ENCODE measurements at regions of chr16 and their contacts with region 1.

Region 1: DNA sequence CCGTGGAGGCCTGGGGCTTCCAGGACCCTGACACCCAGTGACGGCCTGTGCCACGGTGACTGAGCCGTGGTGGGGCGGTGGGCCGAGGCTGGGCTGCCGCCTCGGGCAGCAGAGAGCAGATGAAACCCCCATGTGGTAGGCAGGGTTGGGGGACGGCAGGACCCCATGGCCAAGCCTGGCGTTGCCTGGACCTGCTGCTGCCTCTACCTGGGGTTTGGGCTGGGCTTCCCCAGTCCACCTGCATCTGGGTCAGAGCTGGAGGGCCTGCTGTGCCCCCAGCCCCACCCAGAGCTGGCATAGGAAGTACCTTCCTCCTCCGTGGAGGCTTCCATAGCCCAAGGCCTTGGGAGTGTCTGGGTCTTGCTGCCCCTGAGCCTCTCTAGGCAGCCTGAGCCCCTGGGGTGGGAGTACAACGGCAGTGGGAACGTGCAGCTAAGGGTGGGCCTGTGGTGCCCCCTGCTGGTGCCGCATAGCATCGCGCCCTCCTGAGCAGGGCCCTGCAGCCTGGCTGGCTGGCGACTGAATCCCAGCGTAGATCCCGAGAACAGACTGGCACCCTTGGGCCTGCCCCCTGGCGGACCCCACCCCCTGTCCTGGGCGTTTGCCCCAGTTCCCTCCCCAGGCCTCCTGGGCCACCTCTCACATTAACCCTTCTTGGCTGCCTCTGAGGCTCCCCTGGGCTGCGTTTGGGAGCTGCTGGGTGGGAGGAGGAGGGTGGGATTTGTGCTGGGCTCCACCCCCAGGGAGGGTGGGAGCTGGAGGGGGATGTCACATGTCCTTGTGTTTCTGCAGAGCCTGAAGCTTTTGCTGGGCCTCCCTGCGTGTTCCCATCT is 12.6 kb upstream of the ATP6V0C start:
- DNase-seq: peak; percentile 93
- ATAC-seq: peak; percentile 91
- H3K4me3 Mint-ChIP-seq: peak overlapping the region; percentile 49
- H3K27ac Mint-ChIP-seq: no peak overlapping the region
- H3K4me1 Mint-ChIP-seq: peaks cover 4% of the 10 kb centered on the region
- H3K27me3 Mint-ChIP-seq: no peaks in the 10 kb centered on the region
- CTCF ChIP-seq: peak; percentile 94

Region 2: GRCh38 chr16:2236337-2237101 is 264.6 kb before region 1 on chr16 and contains the start of gene DNASE1L2:
- CTCF ChIA-PET with region 1: interaction called, 17 read pairs
- POLR2A ChIA-PET with region 1: no interaction called
- DNase-seq: peak; percentile 66
- ATAC-seq: peak; percentile 55
- H3K4me3 Mint-ChIP-seq: peak within 1 kb of the TSS; percentile 55
- H3K27ac Mint-ChIP-seq: no peak within 1 kb of the TSS
- H3K4me1 Mint-ChIP-seq: no peaks in the 10 kb centered on the region
- H3K27me3 Mint-ChIP-seq: peaks cover 16% of the 10 kb centered on the region
- CTCF ChIP-seq: no peak
- total RNA-seq, gene DNASE1L2: 0.66 to 1.1 TPM (median 1.0 TPM) in 3 replicates

Region 3: DNA sequence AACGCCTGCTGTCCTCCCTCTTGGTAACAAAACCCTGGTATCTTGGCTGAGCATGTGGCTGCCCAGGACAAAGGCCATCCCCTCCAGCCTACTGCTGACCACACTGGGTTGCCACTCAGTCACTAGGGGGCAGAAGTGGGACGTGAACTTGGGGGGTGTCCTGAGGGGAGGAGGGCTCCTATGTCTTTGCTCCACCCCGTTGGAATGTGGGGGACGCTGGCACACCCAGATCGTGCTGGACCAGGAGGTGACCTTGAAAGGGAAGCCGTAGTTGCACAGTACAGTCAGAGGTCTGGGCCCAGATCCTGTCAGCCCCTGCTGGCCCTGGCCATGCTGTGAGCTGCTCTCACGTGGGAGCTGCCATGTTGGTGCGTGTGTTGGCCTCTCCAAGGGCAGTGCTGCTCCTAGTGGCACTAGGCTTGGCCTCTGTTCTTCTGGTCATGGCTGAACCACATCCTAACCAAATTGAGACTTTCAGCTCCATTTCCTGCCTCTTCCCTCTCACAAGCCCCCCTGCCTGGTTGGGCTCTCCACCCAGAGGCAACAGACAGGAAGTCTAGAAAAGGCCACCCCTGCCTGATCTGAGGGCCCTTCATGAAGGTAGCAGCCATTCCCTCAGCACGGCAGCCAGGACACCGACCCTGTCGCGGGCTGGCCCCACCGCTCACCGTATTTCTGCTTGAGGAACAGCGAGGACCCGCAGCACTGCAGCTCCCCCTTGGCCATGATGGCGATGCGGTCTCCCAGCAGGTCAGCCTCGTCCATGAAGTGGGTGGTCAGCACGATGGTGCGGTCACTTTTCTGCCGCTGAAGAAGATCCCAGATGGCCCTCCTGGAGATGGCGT is 204.3 kb before region 1 on chr16:
- CTCF ChIA-PET with region 1: interaction called, 19 read pairs
- POLR2A ChIA-PET with region 1: no interaction called
- DNase-seq: peak; percentile 74
- ATAC-seq: peak; percentile 91
- H3K4me3 Mint-ChIP-seq: no peak overlapping the region
- H3K27ac Mint-ChIP-seq: no peak overlapping the region
- H3K4me1 Mint-ChIP-seq: no peaks in the 10 kb centered on the region
- H3K27me3 Mint-ChIP-seq: no peaks in the 10 kb centered on the region
- CTCF ChIP-seq: 0 out of 2 replicates have a peak, but pooled peaks have one; percentile 29

Region 4: GRCh38 chr16:2365397-2366294 is 135.5 kb before region 1 on chr16:
- CTCF ChIA-PET with region 1: no interaction called
- POLR2A ChIA-PET with region 1: no interaction called
- DNase-seq: no peak
- ATAC-seq: no peak
- H3K4me3 Mint-ChIP-seq: no peak overlapping the region
- H3K27ac Mint-ChIP-seq: no peak overlapping the region
- H3K4me1 Mint-ChIP-seq: no peaks in the 10 kb centered on the region
- H3K27me3 Mint-ChIP-seq: peaks cover 12% of the 10 kb centered on the region
- CTCF ChIP-seq: no peak

Region 5: DNA sequence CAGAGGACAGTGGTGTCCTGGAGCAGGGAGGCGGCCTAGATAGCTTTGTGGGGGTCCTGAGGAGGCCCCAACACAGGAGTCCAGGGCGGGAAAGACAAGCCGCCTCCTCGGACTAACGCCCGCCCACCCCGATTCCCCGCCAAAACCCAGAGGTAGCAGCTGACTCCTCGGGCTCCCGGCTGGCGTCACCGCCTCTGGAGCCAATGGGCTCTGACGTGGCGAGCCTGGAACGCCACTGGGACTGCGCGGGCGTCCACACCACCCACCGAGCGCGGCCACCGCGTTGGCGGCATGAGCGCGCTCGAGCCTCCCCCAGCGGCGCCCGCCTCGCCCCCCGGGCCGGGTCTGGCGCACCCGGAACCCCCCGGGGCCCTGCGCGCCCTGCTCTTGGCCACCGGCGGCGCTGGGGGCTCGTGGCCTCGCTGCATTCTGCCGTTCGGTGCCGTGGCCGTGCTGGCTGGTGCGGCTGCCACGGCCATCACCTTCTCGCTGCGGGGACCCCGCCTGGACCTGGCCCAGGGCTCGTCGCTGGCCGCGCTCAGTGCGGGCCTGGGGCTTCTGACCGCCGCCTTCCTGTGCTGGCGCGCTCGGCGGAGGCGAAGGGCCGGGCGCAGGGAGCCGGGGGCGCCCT is 33.5 kb before region 1 on chr16:
- CTCF ChIA-PET with region 1: interaction called, 57 read pairs
- POLR2A ChIA-PET with region 1: interaction called, 3 read pairs
- DNase-seq: peak; percentile 73
- ATAC-seq: peak; percentile 38
- H3K4me3 Mint-ChIP-seq: peak overlapping the region; percentile 49
- H3K27ac Mint-ChIP-seq: no peak overlapping the region
- H3K4me1 Mint-ChIP-seq: peaks cover 14% of the 10 kb centered on the region
- H3K27me3 Mint-ChIP-seq: peaks cover 29% of the 10 kb centered on the region
- CTCF ChIP-seq: no peak

Region 6: DNA sequence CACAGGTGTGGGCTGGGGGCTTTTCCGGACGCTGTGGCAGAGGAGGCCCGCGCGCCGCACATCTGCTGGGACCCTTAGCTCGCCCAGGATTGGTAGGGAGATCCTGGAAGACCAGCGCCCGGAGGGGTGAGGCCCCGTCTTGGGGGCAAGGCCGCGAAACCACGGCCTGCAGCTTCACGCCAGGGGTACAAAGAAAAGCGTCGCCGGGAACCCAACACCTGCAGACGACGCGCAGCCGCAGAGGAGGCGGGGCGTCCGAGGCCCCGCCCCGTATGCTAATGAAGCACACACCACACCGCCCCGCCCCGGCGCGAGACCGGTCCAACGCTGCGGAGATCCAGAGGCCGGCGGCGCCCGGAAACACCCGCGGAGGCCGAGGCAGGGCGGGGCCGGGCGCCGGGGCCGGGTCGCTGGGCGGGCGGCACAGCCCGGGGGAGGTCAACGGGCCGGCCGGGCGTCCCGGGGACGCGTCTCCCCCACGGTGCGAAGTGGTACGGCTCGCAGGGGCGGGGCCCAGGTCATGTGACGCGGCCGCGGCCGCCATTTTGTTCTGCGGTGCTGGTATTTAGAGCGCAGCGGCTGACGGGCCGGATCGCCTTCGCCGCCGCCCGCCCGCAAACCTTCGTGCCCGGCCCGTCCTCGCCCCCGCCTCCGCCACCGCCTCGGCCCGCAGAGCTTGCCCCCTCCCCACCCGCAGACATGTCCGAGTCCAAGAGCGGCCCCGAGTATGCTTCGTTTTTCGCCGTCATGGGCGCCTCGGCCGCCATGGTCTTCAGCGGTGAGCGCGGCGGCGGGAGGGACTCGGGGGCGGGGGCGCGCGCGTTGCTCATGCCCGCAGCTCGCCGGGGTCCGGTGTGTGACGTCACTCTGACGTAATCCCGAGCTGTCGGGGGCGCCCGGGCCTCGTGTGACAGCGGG is 12.5 kb after region 1 on chr16 and contains the start of gene ATP6V0C:
- CTCF ChIA-PET with region 1: interaction called, 30 read pairs
- POLR2A ChIA-PET with region 1: no interaction called
- DNase-seq: peak; percentile 92
- ATAC-seq: peak; percentile 85
- H3K4me3 Mint-ChIP-seq: peak within 1 kb of the TSS; percentile 82
- H3K27ac Mint-ChIP-seq: peak within 1 kb of the TSS; percentile 94
- H3K4me1 Mint-ChIP-seq: peaks cover 46% of the 10 kb centered on the region
- H3K27me3 Mint-ChIP-seq: peaks cover 4% of the 10 kb centered on the region
- CTCF ChIP-seq: no peak
- total RNA-seq, gene ATP6V0C: 193 to 212 TPM (median 193 TPM) in 3 replicates

Measured in WTC11 (cell line).